ENCODE measurements at regions of chr11 and their contacts with region 1.

Region 1: DNA sequence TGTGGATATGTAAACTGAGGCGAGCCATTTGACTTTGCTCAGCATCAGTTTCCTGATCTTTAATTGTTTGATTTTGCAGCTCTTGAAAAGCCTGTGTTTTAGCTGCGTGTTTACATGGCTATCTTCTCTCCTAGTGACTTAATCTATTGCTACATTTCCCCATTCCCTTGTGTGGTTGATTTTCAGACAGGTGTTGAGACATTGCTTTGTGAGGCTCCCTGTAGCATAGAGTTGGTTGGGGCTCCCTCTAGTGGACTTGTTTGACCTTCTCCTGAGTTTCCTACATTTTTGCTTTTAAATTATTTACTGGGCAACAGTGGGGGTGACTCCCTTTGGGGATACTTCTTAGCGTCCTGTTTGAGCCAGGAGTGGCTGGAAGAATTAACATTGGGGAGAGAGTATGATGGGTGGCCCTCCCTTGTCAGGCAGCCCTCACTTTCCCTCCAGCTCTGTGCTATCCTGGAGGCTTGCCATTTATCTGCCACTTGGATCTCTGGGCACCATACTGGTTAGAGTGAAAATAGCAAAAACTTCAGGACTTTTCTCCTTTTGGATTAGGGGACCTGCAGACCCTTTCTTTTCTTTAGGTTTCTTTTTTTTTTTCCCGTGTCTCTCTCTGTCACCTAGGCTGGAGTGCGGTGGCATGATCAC is 9.2 kb upstream of the CBL start:
- DNase-seq: peak; percentile 83
- ATAC-seq: peak; percentile 96
- H3K4me3 Mint-ChIP-seq: no peak overlapping the region
- H3K27ac Mint-ChIP-seq: no peak overlapping the region
- H3K4me1 Mint-ChIP-seq: peaks cover 2% of the 10 kb centered on the region
- H3K27me3 Mint-ChIP-seq: no peaks in the 10 kb centered on the region
- CTCF ChIP-seq: peak; percentile 80

Region 2: DNA sequence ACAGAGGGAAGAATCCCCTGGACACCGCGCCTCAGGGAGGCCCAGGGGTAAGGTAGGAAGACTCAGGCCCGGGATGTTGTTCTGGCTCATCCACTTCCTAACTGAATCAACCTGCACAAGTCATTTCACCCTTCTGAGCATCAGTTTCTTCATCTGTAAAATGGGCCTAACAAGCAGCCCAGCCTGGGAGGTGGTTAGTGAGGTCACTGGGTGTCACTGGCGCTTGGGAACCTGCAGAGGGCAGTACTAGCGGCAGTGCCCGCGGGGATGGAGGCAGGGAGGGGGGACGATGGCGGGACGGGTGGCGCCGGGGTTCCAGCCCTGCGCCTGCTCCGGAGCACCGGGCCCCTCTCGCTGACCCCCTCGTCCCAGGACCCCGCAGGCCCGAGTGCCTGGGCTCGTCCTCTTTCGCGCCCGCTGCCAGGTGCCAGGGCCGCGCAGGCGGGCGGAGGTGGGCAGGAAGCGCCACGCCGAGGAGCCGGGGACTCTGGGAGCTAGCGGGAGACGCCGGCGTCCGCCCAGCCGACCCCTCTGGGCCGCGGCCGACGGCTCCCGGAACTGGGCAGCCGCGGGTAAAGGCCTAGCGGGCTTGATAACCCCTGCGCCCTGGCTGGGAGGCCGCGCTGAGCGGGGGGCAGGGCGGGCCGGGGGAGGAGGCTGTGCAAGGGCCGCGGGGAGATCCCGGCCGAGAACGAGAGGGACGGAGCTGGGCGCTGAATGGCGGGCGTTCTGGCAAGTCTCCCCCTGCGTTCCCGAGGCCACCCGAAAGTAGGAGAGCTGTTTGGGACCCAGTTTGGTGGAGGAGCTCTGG is 28.3 kb before region 1 on chr11 and contains the start of gene NLRX1:
- CTCF ChIA-PET with region 1: interaction called, 35 read pairs
- POLR2A ChIA-PET with region 1: no interaction called
- intact Hi-C with region 1: no loop called
- DNase-seq: peak; percentile 91
- ATAC-seq: peak; percentile 95
- H3K4me3 Mint-ChIP-seq: peak within 1 kb of the TSS; percentile 89
- H3K27ac Mint-ChIP-seq: peak within 1 kb of the TSS; percentile 92
- H3K4me1 Mint-ChIP-seq: peaks cover 9% of the 10 kb centered on the region
- H3K27me3 Mint-ChIP-seq: no peaks in the 10 kb centered on the region
- CTCF ChIP-seq: peak; percentile 89
- total RNA-seq, gene NLRX1: 20.1 to 21.3 TPM

Measured in activated CD8-positive, alpha-beta T cell treated with anti-CD3 and anti-CD28 coated beads for 36 hours (primary cell).